Right cardiac atrium (tissue), 5 donors: ENCODE measurements at regions of chr13 and their contacts with region 1.

Region 1: DNA sequence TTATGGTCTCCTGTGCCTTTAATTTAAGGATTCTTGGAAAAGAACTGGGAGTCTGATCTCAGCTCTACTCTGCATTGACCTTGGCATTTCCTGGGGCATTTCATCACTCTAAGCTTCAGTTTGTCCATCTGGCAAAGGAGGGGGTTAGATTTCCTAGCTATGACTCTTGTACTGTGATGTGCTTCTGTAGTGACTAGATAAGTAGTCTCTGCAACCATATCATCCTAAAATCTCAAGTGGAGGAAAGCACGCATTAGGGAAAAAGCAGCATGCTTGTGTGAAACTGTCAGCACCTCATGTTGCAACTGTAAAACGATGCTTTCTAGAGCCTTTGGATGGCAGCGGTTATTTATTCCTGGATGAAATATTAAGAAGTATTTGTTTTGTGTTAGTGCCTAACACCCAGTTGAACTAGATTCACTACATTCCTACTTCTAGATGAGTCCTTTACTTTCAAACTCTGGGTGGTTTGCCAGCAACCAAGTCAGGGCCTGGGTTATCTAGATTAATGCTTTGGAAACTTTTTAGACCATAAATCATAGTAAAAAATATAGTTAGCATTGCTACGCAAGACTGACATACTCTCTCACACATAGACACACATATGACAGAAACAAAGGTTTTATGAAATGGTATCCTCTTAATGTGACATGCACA is 6.8 kb downstream of the WDFY2 start:
- DNase-seq: no peak
- ATAC-seq: peak; percentile 92 to 97
- H3K4me3 ChIP-seq: no peak overlapping the region
- H3K27ac ChIP-seq: peak overlapping the region; percentile 56
- H3K4me1 ChIP-seq: no peaks in the 10 kb centered on the region
- H3K27me3 ChIP-seq: no peaks in the 10 kb centered on the region

Region 2: GRCh38 chr13:51488212-51488611 is 102.9 kb before region 1 on chr13:
- intact Hi-C with region 1: no loop called
- DNase-seq: no peak
- ATAC-seq: no peak
- H3K4me3 ChIP-seq: no peak overlapping the region
- H3K27ac ChIP-seq: no peak overlapping the region
- H3K4me1 ChIP-seq: no peaks in the 10 kb centered on the region
- H3K27me3 ChIP-seq: no peaks in the 10 kb centered on the region

Region 3: DNA sequence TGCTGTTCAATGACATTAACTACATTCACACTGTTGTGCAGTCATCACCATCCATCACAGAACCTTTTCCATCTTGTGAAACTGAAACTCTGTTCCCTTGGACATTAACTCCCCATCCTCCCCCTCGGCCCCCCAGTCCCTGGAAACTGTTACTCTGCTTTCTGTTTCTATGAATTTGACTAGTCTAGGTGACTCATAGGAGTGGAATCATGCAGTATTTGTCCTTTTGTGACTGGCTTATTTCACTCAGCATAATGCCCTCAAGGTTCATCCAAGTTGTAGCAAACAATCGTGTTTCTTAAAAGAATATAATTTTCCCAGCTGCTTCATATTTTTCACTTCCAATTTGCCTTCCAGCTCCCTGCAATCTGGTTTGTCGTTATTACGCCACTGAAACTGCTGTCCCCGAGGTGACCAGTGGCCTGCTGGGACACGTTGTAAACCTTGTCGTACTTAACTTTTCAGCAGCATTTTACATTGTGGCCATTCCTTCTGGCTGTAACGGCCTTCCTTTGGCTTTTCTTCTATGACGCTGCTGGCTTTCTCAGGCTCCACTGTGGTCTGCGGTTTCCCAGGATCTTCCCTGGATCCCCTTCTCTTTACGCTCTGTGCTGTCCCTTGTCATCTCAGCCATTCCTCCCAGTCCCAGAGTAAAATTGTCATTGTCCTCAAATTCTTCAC is 138.9 kb after region 1 on chr13:
- intact Hi-C with region 1: loop called in 2 of 4 experiments (anchors 10 kb)
- DNase-seq: peak; percentile 60 to 77 (median 63)
- ATAC-seq: peak; percentile 77 to 79
- H3K4me3 ChIP-seq: no peak overlapping the region
- H3K27ac ChIP-seq: peak overlapping the region; percentile 68
- H3K4me1 ChIP-seq: peaks cover 10% of the 10 kb centered on the region
- H3K27me3 ChIP-seq: no peaks in the 10 kb centered on the region